Activated naive CD4-positive, alpha-beta T cell treated with anti-CD3 and anti-CD28 coated beads for 36 hours (primary cell): ENCODE measurements at regions of chr7 and their contacts with region 1.

Region 1: GRCh38 chr7:157016352-157017041 is 6.0 kb upstream of the MNX1 start:
- DNase-seq: peak; percentile 77
- H3K4me3 Mint-ChIP-seq: no peak overlapping the region
- H3K27ac Mint-ChIP-seq: no peak overlapping the region
- H3K4me1 Mint-ChIP-seq: peaks cover 25% of the 10 kb centered on the region
- H3K27me3 Mint-ChIP-seq: peaks cover 75% of the 10 kb centered on the region

Region 2: GRCh38 chr7:156865493-156865892 is 151.0 kb before region 1 on chr7:
- CTCF ChIA-PET with region 1: no interaction called
- intact Hi-C with region 1: no loop called
- DNase-seq: no peak
- H3K4me3 Mint-ChIP-seq: no peak overlapping the region
- H3K27ac Mint-ChIP-seq: no peak overlapping the region
- H3K4me1 Mint-ChIP-seq: peaks cover 14% of the 10 kb centered on the region
- H3K27me3 Mint-ChIP-seq: no peaks in the 10 kb centered on the region

Region 3: GRCh38 chr7:157004050-157004838 is 12.3 kb before region 1 on chr7:
- CTCF ChIA-PET with region 1: interaction called, 3 read pairs
- intact Hi-C with region 1: loop called (anchors 1 kb)
- DNase-seq: no peak
- H3K4me3 Mint-ChIP-seq: no peak overlapping the region
- H3K27ac Mint-ChIP-seq: no peak overlapping the region
- H3K4me1 Mint-ChIP-seq: peaks cover 28% of the 10 kb centered on the region
- H3K27me3 Mint-ChIP-seq: peaks cover 74% of the 10 kb centered on the region

Region 4: GRCh38 chr7:157138424-157139110 is 122.1 kb after region 1 on chr7 and contains the start of gene UBE3C:
- CTCF ChIA-PET with region 1: no interaction called
- intact Hi-C with region 1: loop called (anchors 5 kb)
- DNase-seq: peak; percentile 87
- H3K4me3 Mint-ChIP-seq: peak within 1 kb of the TSS; percentile 84
- H3K27ac Mint-ChIP-seq: peak within 1 kb of the TSS; percentile 92
- H3K4me1 Mint-ChIP-seq: peaks cover 38% of the 10 kb centered on the region
- H3K27me3 Mint-ChIP-seq: no peaks in the 10 kb centered on the region
- total RNA-seq, gene UBE3C: 52.9 to 55.7 TPM